Caco-2 (cell line): ENCODE measurements at regions of chr21 and their contacts with region 1.

Region 1: DNA sequence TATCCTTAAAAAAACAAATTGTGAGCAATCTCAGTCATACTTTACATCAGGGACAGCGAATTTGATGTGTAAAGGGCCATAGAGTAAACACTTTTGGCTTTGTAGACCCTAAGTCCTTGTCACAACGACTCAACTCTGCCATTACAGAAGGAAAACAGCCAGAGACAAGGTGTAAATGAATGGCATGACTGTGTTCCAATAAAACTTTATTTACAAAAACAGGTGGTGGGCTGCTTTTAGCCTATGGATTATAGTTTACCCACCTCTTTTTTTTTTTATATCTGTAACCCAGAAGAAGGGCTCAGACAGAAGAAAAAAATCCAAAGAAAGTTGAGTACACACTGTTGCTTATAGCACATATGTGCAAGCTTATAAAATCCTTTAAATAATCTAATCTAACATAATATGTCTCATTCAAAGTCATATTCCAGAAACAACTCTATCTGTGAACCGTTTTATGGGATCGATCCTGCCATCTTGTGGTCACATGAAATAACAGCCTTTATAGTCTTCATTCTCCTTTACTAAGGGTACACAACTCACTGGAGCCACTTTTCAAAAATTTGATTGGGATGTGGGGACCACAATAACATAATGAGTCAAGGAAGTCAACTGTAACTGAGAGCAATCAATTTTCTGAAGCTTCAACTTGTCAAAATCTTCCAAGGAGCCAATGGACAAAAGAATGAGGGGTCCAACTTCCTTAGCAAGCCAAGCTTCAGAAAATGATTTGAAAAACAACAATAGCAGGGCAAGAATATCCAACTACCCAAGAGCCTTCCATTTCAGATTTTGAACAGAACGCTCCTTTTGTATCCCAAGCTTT is 142.2 kb upstream of the KRTAP19-8 start:
- DNase-seq: peak in 1 of 2 experiments; percentile 10
- H3K4me3 ChIP-seq: no peak overlapping the region
- H3K4me3 Mint-ChIP-seq: no peak overlapping the region
- H3K27ac Mint-ChIP-seq: no peak overlapping the region
- H3K4me1 ChIP-seq: no peaks in the 10 kb centered on the region
- H3K4me1 Mint-ChIP-seq: no peaks in the 10 kb centered on the region
- H3K27me3 ChIP-seq: no peaks in the 10 kb centered on the region
- H3K27me3 Mint-ChIP-seq: no peaks in the 10 kb centered on the region
- CTCF ChIP-seq: peak in 1 of 2 experiments; percentile 49

Region 2: GRCh38 chr21:30979054-30979453 is 201.4 kb before region 1 on chr21:
- CTCF ChIA-PET with region 1: no interaction called
- POLR2A ChIA-PET with region 1: no interaction called
- intact Hi-C with region 1: no loop called
- DNase-seq: no peak
- H3K4me3 ChIP-seq: no peak overlapping the region
- H3K4me3 Mint-ChIP-seq: no peak overlapping the region
- H3K27ac Mint-ChIP-seq: no peak overlapping the region
- H3K4me1 ChIP-seq: no peaks in the 10 kb centered on the region
- H3K4me1 Mint-ChIP-seq: no peaks in the 10 kb centered on the region
- H3K27me3 ChIP-seq: no peaks in the 10 kb centered on the region
- H3K27me3 Mint-ChIP-seq: peaks cover 8% of the 10 kb centered on the region
- CTCF ChIP-seq: no peak

Region 3: DNA sequence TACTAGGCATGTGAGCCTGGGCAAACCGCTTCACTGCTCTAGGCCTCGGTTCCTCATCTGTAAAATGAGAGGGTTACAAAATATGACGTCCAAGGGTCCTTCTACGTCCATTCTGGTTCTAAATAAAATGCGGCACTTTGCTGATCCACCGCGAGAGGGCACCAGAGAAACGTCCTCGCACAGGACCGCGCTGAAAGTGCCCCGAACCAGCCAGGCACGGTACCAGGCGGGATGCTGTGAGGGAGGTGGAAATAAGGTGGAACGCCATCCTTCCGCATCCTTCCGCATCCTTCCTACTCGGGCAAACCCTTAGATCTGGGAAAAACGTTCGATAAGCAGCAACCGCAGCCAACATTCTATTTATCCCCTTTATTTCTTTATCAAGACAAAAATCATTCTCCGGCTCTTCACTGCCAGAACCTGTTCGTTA is 81.9 kb before region 1 on chr21:
- CTCF ChIA-PET with region 1: no interaction called
- POLR2A ChIA-PET with region 1: no interaction called
- intact Hi-C with region 1: loop called (anchors 1 kb)
- DNase-seq: peak; percentile 60 to 67
- H3K4me3 ChIP-seq: no peak overlapping the region
- H3K4me3 Mint-ChIP-seq: no peak overlapping the region
- H3K27ac Mint-ChIP-seq: no peak overlapping the region
- H3K4me1 ChIP-seq: 0 out of 2 replicates have a peak, but pooled peaks cover 5% of the 10 kb centered on the region
- H3K4me1 Mint-ChIP-seq: no peaks in the 10 kb centered on the region
- H3K27me3 ChIP-seq: no peaks in the 10 kb centered on the region; the same call in 1 of the 2 replicates
- H3K27me3 Mint-ChIP-seq: peaks cover 9% of the 10 kb centered on the region
- CTCF ChIP-seq: peak; percentile 79 to 86

Region 4: DNA sequence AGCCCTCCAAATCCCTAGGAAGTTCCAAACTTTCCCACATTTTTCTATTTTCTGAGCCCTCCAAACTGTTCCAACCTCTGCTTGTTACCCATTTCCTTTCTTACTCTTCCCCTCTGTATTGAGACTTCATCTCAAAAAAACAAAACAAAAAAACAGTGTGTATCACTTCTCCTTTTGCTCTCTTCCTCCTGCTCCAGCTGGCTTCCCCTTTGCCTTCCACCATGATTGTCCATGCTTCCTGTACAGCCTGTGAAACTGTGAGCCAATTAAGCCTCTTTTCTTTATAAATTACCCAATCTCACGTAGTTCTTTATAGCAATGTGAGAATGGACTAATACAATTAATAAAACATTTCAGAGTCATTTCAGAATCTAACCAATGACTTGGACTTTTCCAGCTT is 72.6 kb before region 1 on chr21:
- CTCF ChIA-PET with region 1: no interaction called
- POLR2A ChIA-PET with region 1: no interaction called
- intact Hi-C with region 1: loop called (anchors 1 kb)
- DNase-seq: no peak
- H3K4me3 ChIP-seq: no peak overlapping the region
- H3K4me3 Mint-ChIP-seq: no peak overlapping the region
- H3K27ac Mint-ChIP-seq: no peak overlapping the region
- H3K4me1 ChIP-seq: 0 out of 2 replicates have a peak, but pooled peaks cover 7% of the 10 kb centered on the region
- H3K4me1 Mint-ChIP-seq: no peaks in the 10 kb centered on the region
- H3K27me3 ChIP-seq: no peaks in the 10 kb centered on the region; the same call in 1 of the 2 replicates
- H3K27me3 Mint-ChIP-seq: no peaks in the 10 kb centered on the region
- CTCF ChIP-seq: no peak

Region 5: GRCh38 chr21:31218830-31219608 is 38.5 kb after region 1 on chr21:
- CTCF ChIA-PET with region 1: no interaction called
- POLR2A ChIA-PET with region 1: no interaction called
- intact Hi-C with region 1: no loop called
- DNase-seq: no peak
- H3K4me3 ChIP-seq: no peak overlapping the region
- H3K4me3 Mint-ChIP-seq: no peak overlapping the region
- H3K27ac Mint-ChIP-seq: no peak overlapping the region
- H3K4me1 ChIP-seq: no peaks in the 10 kb centered on the region
- H3K4me1 Mint-ChIP-seq: peaks cover 6% of the 10 kb centered on the region
- H3K27me3 ChIP-seq: no peaks in the 10 kb centered on the region
- H3K27me3 Mint-ChIP-seq: no peaks in the 10 kb centered on the region
- CTCF ChIP-seq: no peak